ENCODE measurements at regions of chr17 and their contacts with region 1.

Region 1: DNA sequence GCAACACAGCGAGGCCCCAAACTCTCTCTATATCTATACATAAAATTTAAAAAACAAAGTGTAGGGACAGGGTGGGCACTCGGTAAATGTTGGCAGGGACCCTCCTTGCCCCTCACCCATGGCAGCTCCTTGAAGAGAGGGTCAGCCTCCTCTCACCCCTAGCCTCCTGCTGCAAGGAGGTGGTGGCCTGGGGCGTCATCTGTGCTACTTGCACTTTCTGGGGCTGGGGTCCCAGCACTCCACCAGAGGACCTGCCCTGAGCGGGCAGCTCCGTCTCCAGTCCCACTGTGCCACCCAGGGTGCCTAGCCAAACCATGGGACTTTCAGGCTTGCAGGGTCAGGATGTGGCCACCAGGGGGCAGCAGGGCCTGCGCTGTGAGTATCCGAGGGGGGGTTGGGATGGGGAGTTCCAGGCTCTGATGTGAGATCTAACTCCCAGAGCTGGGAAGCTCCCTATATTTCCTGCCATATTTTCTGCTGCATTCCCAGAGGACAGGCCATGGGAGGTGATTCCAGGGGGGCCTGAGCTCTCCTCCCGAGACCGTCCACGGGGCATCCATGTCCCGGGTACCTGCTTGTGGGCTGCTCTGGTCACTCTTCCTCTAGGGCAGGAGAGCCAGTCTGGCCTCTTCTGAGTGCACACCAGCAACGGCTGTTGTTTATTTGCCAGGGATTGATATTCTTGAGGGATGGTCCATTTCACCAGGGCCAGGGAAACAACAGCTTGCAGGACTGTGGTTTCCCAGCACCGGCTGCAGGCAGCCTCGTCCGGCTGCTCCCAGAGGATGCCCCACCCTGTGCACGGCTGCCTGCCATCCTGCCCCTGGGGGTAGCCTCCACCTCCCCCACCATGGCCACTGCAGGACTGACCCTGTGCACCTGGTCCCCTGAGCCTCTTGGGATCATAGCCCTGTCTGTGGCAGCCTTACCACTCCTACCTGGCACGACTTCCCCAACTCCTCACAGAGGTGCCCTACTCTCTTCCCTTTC is 1.1 kb downstream of the GPR142 start:
- DNase-seq: peak; percentile 82
- H3K4me3 Mint-ChIP-seq: peak overlapping the region; percentile 35
- H3K27ac Mint-ChIP-seq: no peak overlapping the region
- H3K4me1 Mint-ChIP-seq: peaks cover 12% of the 10 kb centered on the region
- H3K27me3 Mint-ChIP-seq: no peaks in the 10 kb centered on the region

Region 2: GRCh38 chr17:74212913-74213791 is 155.2 kb before region 1 on chr17 and contains the start of gene TTYH2:
- CTCF ChIA-PET with region 1: interaction called, 10 read pairs
- POLR2A ChIA-PET with region 1: no interaction called
- intact Hi-C with region 1: no loop called
- DNase-seq: peak; percentile 82
- H3K4me3 Mint-ChIP-seq: peak within 1 kb of the TSS; percentile 74
- H3K27ac Mint-ChIP-seq: peak within 1 kb of the TSS; percentile 36
- H3K4me1 Mint-ChIP-seq: peaks cover 68% of the 10 kb centered on the region
- H3K27me3 Mint-ChIP-seq: no peaks in the 10 kb centered on the region
- total RNA-seq, gene TTYH2: 7.6 to 7.9 TPM

Region 3: GRCh38 chr17:74354123-74354522 is 14.3 kb before region 1 on chr17:
- CTCF ChIA-PET with region 1: interaction called, 43 read pairs
- POLR2A ChIA-PET with region 1: no interaction called
- intact Hi-C with region 1: no loop called
- DNase-seq: peak; percentile 85
- H3K4me3 Mint-ChIP-seq: no peak overlapping the region
- H3K27ac Mint-ChIP-seq: no peak overlapping the region
- H3K4me1 Mint-ChIP-seq: peaks cover 8% of the 10 kb centered on the region
- H3K27me3 Mint-ChIP-seq: peaks cover 60% of the 10 kb centered on the region

Region 4: GRCh38 chr17:74417178-74418045 is 49.0 kb after region 1 on chr17:
- CTCF ChIA-PET with region 1: interaction called, 12 read pairs
- POLR2A ChIA-PET with region 1: no interaction called
- intact Hi-C with region 1: no loop called
- DNase-seq: peak; percentile 29
- H3K4me3 Mint-ChIP-seq: no peak overlapping the region
- H3K27ac Mint-ChIP-seq: no peak overlapping the region
- H3K4me1 Mint-ChIP-seq: peaks cover 5% of the 10 kb centered on the region
- H3K27me3 Mint-ChIP-seq: peaks cover 10% of the 10 kb centered on the region

Region 5: GRCh38 chr17:74442670-74443515 is 74.5 kb after region 1 on chr17:
- CTCF ChIA-PET with region 1: interaction called, 14 read pairs
- POLR2A ChIA-PET with region 1: no interaction called
- intact Hi-C with region 1: no loop called
- DNase-seq: no peak
- H3K4me3 Mint-ChIP-seq: no peak overlapping the region
- H3K27ac Mint-ChIP-seq: no peak overlapping the region
- H3K4me1 Mint-ChIP-seq: no peaks in the 10 kb centered on the region
- H3K27me3 Mint-ChIP-seq: peaks cover 4% of the 10 kb centered on the region

Region 6: DNA sequence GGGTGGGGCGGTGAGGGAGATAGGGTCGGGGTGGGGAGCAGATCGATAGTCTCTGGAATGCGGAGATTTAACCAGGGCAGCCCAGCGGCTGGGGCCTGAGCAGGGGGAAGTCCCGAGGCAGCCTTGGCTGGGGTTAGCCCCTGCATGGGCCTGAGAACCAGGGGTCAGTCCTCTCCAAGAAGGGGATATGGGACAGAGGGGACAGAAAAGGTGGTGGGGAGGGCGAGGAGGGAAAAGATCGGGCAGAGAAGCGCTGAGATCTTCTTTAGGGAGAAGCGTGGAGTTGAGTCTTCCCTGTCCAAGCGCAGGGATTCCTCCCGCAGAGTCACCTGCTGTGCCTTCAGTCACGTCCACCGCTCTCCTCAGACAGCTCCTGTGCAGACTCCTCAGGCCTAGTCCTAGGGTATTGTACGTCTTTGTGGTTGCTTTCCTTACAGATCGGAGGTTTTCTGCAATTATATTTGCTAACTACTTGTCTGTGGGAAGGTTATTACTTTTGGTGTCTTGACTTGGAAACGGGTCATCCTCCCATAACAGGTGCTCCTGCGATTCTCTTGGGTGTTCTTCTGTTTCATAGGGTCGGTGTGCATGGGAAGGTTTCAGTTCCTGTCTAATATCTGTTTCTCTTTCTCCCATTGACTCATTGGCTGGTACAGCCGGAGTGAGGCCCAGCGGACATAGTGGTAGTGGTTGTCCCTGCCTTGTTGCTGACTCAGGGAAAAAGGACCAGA is 99.0 kb after region 1 on chr17:
- CTCF ChIA-PET with region 1: interaction called, 12 read pairs
- POLR2A ChIA-PET with region 1: no interaction called
- intact Hi-C with region 1: no loop called
- DNase-seq: peak; percentile 48
- H3K4me3 Mint-ChIP-seq: no peak overlapping the region
- H3K27ac Mint-ChIP-seq: peak overlapping the region; percentile 86
- H3K4me1 Mint-ChIP-seq: peaks cover 44% of the 10 kb centered on the region
- H3K27me3 Mint-ChIP-seq: no peaks in the 10 kb centered on the region

Region 7: GRCh38 chr17:74499992-74500391 is 131.6 kb after region 1 on chr17:
- CTCF ChIA-PET with region 1: interaction called, 34 read pairs
- POLR2A ChIA-PET with region 1: no interaction called
- intact Hi-C with region 1: no loop called
- DNase-seq: no peak
- H3K4me3 Mint-ChIP-seq: no peak overlapping the region
- H3K27ac Mint-ChIP-seq: no peak overlapping the region
- H3K4me1 Mint-ChIP-seq: no peaks in the 10 kb centered on the region
- H3K27me3 Mint-ChIP-seq: peaks cover 2% of the 10 kb centered on the region